Activated CD8-positive, alpha-beta T cell treated with anti-CD3 and anti-CD28 coated beads for 36 hours (primary cell): ENCODE measurements at regions of chr19 and their contacts with region 1.

Region 1: DNA sequence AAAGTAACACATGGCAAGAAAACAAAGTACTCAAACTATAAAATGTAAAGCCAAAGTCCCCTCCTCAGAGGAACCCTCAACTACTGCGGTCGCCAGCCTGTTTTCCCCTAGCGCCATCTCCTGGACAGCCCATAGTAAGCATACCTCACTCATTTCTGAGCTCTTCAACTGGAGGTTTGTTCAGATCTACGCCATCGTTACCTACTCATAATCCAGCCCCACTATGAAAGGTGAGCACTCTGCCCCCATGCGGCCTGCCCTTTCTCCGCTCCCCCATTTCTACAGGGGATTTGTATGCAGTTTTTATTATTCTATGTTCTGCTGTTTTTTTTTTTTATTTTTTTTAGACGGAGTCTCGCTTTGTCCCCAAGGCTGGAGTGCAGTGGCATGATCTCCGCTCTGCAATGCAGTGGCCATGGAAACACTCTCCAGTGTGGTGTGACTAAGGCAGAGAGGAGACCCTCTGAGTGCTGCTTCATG is 26.2 kb downstream of the OPA3 start:
- DNase-seq: peak; percentile 84
- ATAC-seq: peak; percentile 98
- H3K4me3 Mint-ChIP-seq: no peak overlapping the region
- H3K27ac Mint-ChIP-seq: no peak overlapping the region
- H3K4me1 Mint-ChIP-seq: peaks cover 22% of the 10 kb centered on the region
- H3K27me3 Mint-ChIP-seq: no peaks in the 10 kb centered on the region
- CTCF ChIP-seq: peak; percentile 85

Region 2: DNA sequence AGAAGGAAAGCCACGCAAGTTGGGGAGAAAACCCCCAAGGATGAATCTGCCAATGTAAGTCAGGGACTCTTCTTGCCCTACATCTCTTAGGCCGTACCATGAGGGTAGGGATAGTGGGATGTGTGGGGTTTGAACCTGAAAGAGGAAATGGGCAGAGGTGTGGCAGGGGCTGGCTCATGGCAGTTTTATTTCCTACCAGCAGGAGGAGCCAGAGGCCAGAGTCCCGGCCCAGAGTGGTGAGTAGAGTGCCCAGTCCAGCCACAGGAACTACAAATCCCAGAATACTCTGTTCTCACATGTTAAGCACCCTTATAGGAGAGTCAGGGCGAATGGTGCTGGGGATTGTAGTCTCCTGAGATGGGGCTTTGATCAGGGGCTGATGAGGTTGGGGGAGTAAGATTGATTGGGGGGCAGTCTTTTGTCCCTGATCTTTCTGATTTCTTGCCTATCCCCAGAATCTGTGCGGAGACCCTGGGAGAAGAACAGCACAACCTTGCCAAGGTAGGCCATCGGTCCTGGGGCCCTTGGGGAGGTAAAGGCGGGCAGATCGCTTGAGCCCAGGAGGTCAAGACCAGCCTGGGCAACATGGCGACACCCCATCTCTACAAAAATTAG is 34.7 kb before region 1 on chr19:
- CTCF ChIA-PET with region 1: interaction called, 16 read pairs
- POLR2A ChIA-PET with region 1: interaction called, 6 read pairs
- intact Hi-C with region 1: no loop called
- DNase-seq: peak; percentile 82
- ATAC-seq: peak; percentile 98
- H3K4me3 Mint-ChIP-seq: no peak overlapping the region
- H3K27ac Mint-ChIP-seq: peak overlapping the region; percentile 58
- H3K4me1 Mint-ChIP-seq: peaks cover 14% of the 10 kb centered on the region
- H3K27me3 Mint-ChIP-seq: no peaks in the 10 kb centered on the region
- CTCF ChIP-seq: peak; percentile 79

Region 3: GRCh38 chr19:45569619-45570421 is 11.4 kb after region 1 on chr19:
- CTCF ChIA-PET with region 1: interaction called, 25 read pairs
- POLR2A ChIA-PET with region 1: interaction called, 3 read pairs
- intact Hi-C with region 1: no loop called
- DNase-seq: peak; percentile 81
- ATAC-seq: peak; percentile 91
- H3K4me3 Mint-ChIP-seq: no peak overlapping the region
- H3K27ac Mint-ChIP-seq: no peak overlapping the region
- H3K4me1 Mint-ChIP-seq: peaks cover 7% of the 10 kb centered on the region
- H3K27me3 Mint-ChIP-seq: no peaks in the 10 kb centered on the region
- CTCF ChIP-seq: peak; percentile 72

Region 4: GRCh38 chr19:45584332-45585157 is 26.1 kb after region 1 on chr19 and contains the start of gene OPA3:
- CTCF ChIA-PET with region 1: interaction called, 15 read pairs
- POLR2A ChIA-PET with region 1: interaction called, 3 read pairs
- intact Hi-C with region 1: no loop called
- DNase-seq: peak; percentile 100
- ATAC-seq: peak; percentile 93
- H3K4me3 Mint-ChIP-seq: peak within 1 kb of the TSS; percentile 91
- H3K27ac Mint-ChIP-seq: peak within 1 kb of the TSS; percentile 99
- H3K4me1 Mint-ChIP-seq: peaks cover 17% of the 10 kb centered on the region
- H3K27me3 Mint-ChIP-seq: peaks cover 8% of the 10 kb centered on the region
- CTCF ChIP-seq: no peak
- total RNA-seq, gene OPA3: 13.7 to 14.3 TPM